ENCODE measurements at regions of chr17 and their contacts with region 1.

Region 1: DNA sequence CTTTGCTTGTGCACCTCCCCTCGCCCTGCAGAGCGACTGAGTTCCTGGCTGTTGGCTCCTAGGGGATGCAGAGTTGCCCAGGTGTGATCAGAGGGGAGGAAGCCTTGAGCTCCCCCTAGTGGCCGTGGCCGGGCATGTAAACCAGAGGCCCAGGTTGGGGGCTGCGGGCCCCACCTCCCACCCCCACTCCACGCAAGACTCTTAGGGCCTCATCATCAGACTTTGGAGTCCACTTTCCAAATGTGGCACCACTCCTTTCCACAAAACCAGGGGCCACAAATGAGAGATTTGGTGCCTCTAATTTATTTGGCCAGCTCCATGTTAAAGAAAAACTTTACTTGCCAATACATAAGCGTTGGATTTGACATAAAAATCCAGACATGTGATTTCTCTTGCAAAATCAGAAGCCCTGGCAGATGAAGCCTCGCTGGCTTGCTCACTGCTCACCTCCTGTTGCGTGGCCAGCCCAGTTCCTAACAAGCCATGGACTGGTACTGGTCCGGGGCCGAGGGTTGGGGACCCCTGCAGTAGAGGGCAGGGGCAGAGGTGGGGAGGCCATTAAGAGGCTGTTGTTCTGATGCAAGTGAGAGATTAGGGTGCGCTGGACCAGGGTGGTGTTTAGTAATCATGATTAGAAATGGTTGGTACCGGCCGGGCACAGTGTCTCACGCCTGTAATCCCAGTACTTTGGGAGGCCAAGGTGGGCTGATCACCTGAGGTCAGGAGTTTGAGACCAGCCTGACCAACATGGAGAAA is 28.7 kb upstream of the GAS7 start:
- DNase-seq: no peak
- H3K4me3 ChIP-seq: no peak overlapping the region
- CTCF ChIP-seq: peak; percentile 85

Region 2: GRCh38 chr17:9968902-9969617 is 258.0 kb before region 1 on chr17:
- CTCF ChIA-PET with region 1: interaction called, 62 read pairs
- POLR2A ChIA-PET with region 1: no interaction called
- DNase-seq: no peak
- H3K4me3 ChIP-seq: no peak overlapping the region
- CTCF ChIP-seq: no peak

Region 3: GRCh38 chr17:10210151-10210930 is 16.8 kb before region 1 on chr17:
- CTCF ChIA-PET with region 1: interaction called, 39 read pairs
- POLR2A ChIA-PET with region 1: no interaction called
- DNase-seq: peak; percentile 10
- H3K4me3 ChIP-seq: no peak overlapping the region
- CTCF ChIP-seq: no peak

Region 4: DNA sequence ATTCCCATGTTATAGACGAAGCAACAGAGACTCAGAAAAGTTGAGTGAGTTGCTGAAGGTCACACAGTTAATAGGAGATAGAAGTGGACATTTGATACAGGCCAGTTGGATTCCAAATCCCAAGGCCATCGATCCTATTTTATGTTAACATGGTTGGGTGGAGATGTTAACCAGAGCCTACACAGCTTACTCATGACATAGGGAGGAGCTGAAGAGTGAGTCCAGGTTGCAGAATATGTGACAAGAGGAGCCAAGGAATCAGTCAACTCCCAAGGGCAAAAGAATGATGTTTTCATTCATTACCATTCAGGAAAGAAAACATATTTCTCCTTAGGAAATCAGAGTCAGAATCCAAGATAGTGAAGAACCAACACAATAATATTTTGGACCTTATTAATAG is 11.6 kb after region 1 on chr17:
- CTCF ChIA-PET with region 1: interaction called, 28 read pairs
- POLR2A ChIA-PET with region 1: no interaction called
- DNase-seq: no peak
- H3K4me3 ChIP-seq: no peak overlapping the region
- CTCF ChIP-seq: no peak

Region 5: GRCh38 chr17:10261098-10261497 is 34.0 kb after region 1 on chr17:
- CTCF ChIA-PET with region 1: no interaction called
- POLR2A ChIA-PET with region 1: no interaction called
- DNase-seq: no peak
- H3K4me3 ChIP-seq: no peak overlapping the region
- CTCF ChIP-seq: no peak

Region 6: GRCh38 chr17:10357768-10358167 is 130.7 kb after region 1 on chr17:
- CTCF ChIA-PET with region 1: no interaction called
- POLR2A ChIA-PET with region 1: no interaction called
- DNase-seq: no peak
- H3K4me3 ChIP-seq: no peak overlapping the region
- CTCF ChIP-seq: peak; percentile 41